ENCODE measurements at regions of chr5 and their contacts with region 1.

Region 1: GRCh38 chr5:149775785-149776184 is 45.7 kb downstream of the PPARGC1B start:
- DNase-seq: no peak
- H3K4me3 ChIP-seq: no peak overlapping the region
- H3K27ac ChIP-seq: no peak overlapping the region
- H3K4me1 ChIP-seq: peaks cover 3 to 36% (median 22%) of the 10 kb centered on the region in 4 experiments
- H3K27me3 ChIP-seq: no peaks in the 10 kb centered on the region
- CTCF ChIP-seq: peak in 2 of 3 experiments; percentile 63 to 81; a peak in 3 of 4 replicates
- EP300 ChIP-seq: no peak
- POLR2A ChIP-seq: no peak
- RAD21 ChIP-seq: peak; percentile 62 to 65

Region 2: DNA sequence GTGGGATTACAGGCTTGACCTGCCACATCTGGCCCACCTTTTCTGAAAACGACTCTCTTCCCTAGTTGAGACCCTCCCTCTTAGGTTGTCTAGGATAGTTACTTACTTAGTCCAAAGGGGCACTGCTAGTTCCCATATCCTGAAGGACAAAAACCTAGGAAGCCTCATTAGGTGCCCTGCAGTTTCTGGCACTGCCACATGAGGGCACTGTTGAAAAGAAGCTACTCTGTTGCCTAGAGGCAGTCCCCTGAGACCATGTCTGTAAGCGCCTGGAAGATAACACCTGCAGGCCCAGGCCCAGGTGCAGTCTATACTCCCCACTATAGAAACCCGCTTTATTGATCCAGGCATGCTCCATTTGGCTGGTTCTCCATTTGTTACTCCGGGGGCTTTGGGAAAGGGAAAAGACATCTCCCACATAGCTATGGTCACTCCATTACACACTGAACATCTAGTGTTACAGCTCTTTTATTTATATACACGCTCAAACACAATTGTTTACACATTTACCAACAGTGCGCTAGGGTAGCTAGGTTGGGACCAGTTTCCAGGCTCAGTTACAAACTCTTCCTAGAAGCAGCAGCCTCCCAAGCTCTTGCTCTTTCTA is 119.1 kb before region 1 on chr5:
- CTCF ChIA-PET with region 1: interaction called, 36 read pairs
- POLR2A ChIA-PET with region 1: no interaction called
- DNase-seq: peak; percentile 56 to 95
- H3K4me3 ChIP-seq: no peak overlapping the region
- H3K27ac ChIP-seq: no peak overlapping the region
- H3K4me1 ChIP-seq: no peaks in the 10 kb centered on the region; a peak in 1 of 7 replicates
- H3K27me3 ChIP-seq: no peaks in the 10 kb centered on the region; a peak in 1 of 7 replicates
- CTCF ChIP-seq: peak; percentile 64 to 94 (median 91)
- EP300 ChIP-seq: no peak
- POLR2A ChIP-seq: no peak
- RAD21 ChIP-seq: peak; percentile 80 to 88

Region 3: GRCh38 chr5:149679876-149680809 is 95.6 kb before region 1 on chr5:
- CTCF ChIA-PET with region 1: interaction called, 13 read pairs
- POLR2A ChIA-PET with region 1: interaction called, 3 read pairs
- DNase-seq: no peak
- H3K4me3 ChIP-seq: no peak overlapping the region
- H3K27ac ChIP-seq: no peak overlapping the region
- H3K4me1 ChIP-seq: no peaks in the 10 kb centered on the region; a peak in 1 of 7 replicates
- H3K27me3 ChIP-seq: no peaks in the 10 kb centered on the region
- CTCF ChIP-seq: no peak
- EP300 ChIP-seq: no peak
- POLR2A ChIP-seq: no peak
- RAD21 ChIP-seq: no peak

Region 4: GRCh38 chr5:149740866-149741459 is 34.8 kb before region 1 on chr5:
- CTCF ChIA-PET with region 1: interaction called, 15 read pairs
- POLR2A ChIA-PET with region 1: no interaction called
- DNase-seq: no peak
- H3K4me3 ChIP-seq: no peak overlapping the region
- H3K27ac ChIP-seq: no peak overlapping the region
- H3K4me1 ChIP-seq: no peaks in the 10 kb centered on the region
- H3K27me3 ChIP-seq: no peaks in the 10 kb centered on the region
- CTCF ChIP-seq: no peak
- EP300 ChIP-seq: no peak
- POLR2A ChIP-seq: no peak
- RAD21 ChIP-seq: no peak

Region 5: DNA sequence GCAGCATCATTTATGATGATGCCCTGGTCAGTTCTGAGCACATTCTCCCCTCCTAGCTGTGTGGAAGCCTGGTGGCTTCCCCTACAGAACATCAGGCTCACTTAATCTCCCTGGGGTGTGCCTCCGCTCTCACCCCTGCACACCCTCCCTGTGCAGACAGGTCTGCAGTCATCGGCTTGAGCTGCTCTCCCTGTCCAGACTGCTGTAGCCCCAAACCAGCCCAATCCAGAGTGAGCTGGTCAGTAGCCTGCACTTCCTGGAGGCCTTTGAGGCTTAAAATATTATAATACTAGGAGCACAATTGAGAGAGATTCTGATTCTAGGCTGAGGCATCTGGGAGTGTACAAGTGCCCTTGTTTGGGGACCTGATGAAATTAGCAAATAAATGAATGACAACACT is 14.5 kb after region 1 on chr5:
- CTCF ChIA-PET with region 1: interaction called, 43 read pairs
- POLR2A ChIA-PET with region 1: interaction called, 3 read pairs
- DNase-seq: no peak
- H3K4me3 ChIP-seq: no peak overlapping the region
- H3K27ac ChIP-seq: no peak overlapping the region
- H3K4me1 ChIP-seq: no peaks in the 10 kb centered on the region
- H3K27me3 ChIP-seq: no peaks in the 10 kb centered on the region
- CTCF ChIP-seq: no peak
- EP300 ChIP-seq: no peak
- POLR2A ChIP-seq: no peak
- RAD21 ChIP-seq: no peak

Region 6: GRCh38 chr5:149820536-149821510 is 45.0 kb after region 1 on chr5:
- CTCF ChIA-PET with region 1: interaction called, 37 read pairs
- POLR2A ChIA-PET with region 1: no interaction called
- DNase-seq: no peak
- H3K4me3 ChIP-seq: no peak overlapping the region; a peak in 1 of 8 replicates
- H3K27ac ChIP-seq: no peak overlapping the region
- H3K4me1 ChIP-seq: peaks cover 0 to 3% (median 2%) of the 10 kb centered on the region in 4 experiments; a peak in 1 of 7 replicates
- H3K27me3 ChIP-seq: no peaks in the 10 kb centered on the region
- CTCF ChIP-seq: no peak
- EP300 ChIP-seq: no peak
- POLR2A ChIP-seq: no peak
- RAD21 ChIP-seq: no peak

Region 7: GRCh38 chr5:149834246-149834855 is 58.6 kb after region 1 on chr5:
- CTCF ChIA-PET with region 1: interaction called, 12 read pairs
- POLR2A ChIA-PET with region 1: interaction called, 3 read pairs
- DNase-seq: peak; percentile 25 to 58
- H3K4me3 ChIP-seq: no peak overlapping the region
- H3K27ac ChIP-seq: no peak overlapping the region
- H3K4me1 ChIP-seq: no peaks in the 10 kb centered on the region
- H3K27me3 ChIP-seq: no peaks in the 10 kb centered on the region
- CTCF ChIP-seq: peak; percentile 35 to 91 (median 73)
- EP300 ChIP-seq: no peak
- POLR2A ChIP-seq: no peak
- RAD21 ChIP-seq: peak; percentile 79